T-cell (primary cell): ENCODE measurements at regions of chr4 and their contacts with region 1.

Region 1: DNA sequence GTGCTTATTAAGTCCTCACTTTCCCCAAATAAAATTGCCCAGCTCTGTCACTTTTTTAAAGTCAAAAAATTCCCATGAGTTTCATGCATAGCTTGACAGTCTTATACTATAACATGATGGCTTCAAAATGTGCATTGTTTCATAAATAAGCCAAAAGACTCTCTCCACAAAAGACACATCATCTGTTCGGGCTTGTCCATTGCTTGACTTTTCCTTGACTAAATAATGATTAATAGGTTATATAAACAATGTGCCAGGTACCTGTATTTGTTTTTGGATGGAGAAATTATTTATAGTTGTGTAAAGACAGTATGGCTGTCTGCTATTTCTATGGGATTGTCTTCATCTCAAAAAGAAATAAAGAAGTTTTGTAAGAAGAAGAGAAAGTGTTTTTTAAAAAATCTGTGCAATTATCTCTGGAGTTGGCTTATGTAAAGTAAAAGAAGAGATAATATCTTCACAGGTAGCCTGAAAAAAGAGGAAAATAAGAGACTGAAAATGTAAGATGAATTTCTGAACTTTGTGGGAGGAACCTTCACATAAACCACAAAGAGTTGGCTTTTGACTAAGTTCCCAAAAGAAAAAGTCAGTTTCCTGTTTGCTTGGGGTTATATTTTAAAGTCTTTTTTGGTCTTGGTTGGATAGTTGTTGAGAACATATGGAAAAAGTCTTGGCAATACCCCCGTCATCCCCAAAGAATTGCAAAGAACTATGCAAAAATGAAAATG is 329.0 kb upstream of the KLF3 start:
- DNase-seq: no peak
- ATAC-seq: no peak
- H3K4me3 ChIP-seq: no peak overlapping the region
- H3K4me3 Mint-ChIP-seq: peak overlapping the region in 2 of 3 donors; percentile 40 to 57
- H3K27ac ChIP-seq: no peak overlapping the region
- H3K27ac Mint-ChIP-seq: peak overlapping the region; percentile 69 to 74
- H3K4me1 ChIP-seq: peaks cover 24 to 42% of the 10 kb centered on the region in 2 experiments
- H3K4me1 Mint-ChIP-seq: peaks cover 38 to 49% (median 41%) of the 10 kb centered on the region in 3 donors
- H3K27me3 ChIP-seq: no peaks in the 10 kb centered on the region
- H3K27me3 Mint-ChIP-seq: no peaks in the 10 kb centered on the region

Region 2: DNA sequence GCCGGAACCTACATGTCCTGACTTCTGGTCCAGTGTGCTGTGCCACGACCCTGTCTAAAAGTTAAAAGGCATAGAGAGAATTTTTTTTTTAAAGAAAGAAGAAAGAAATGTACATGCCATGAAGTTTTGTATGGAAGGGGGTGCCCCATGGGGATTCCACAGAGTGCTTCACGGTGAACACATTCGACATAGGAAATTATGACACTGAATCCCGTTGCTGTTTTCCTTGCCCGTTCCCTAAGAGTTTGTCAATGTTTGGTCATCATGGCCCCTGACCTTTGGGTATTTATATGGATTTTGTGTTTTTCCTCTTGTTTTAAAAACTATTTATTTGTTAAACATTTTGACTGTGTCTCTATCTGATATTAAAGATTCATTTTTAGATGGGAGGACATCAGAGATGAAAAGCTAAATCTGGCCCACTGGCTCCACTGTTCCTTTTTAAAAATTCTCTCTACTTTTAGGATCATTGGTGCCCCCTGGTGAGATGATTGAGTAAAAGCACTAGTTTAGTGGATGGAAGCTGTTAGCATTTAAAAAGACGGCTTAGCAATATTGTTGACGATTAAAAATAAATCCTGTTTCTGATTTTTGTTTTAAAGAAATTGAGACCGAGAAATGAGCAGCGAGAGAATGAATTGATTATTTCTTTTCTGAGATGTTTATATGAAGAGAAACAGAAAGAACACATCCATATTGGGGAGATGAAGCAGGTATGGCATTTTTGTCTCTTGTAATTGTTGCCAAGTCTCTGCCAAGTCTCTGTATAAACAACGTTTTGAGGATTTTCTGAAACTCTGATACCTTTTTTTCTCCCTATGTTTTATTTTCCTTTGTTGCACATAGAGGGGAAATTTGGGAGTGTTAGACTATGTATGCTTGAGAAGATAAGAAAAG is 299.7 kb before region 1 on chr4:
- CTCF ChIA-PET with region 1: no interaction called
- POLR2A ChIA-PET with region 1: interaction called in 1 of 2 experiments, 12 read pairs
- DNase-seq: peak in 24 of 35 experiments; percentile 4 to 76 (median 22)
- ATAC-seq: peak; percentile 29 to 66 (median 41)
- H3K4me3 ChIP-seq: no peak overlapping the region
- H3K4me3 Mint-ChIP-seq: no peak overlapping the region
- H3K27ac ChIP-seq: no peak overlapping the region
- H3K27ac Mint-ChIP-seq: no peak overlapping the region
- H3K4me1 ChIP-seq: no peaks in the 10 kb centered on the region
- H3K4me1 Mint-ChIP-seq: peaks cover 0 to 1% (median 0%) of the 10 kb centered on the region in 3 donors
- H3K27me3 ChIP-seq: no peaks in the 10 kb centered on the region
- H3K27me3 Mint-ChIP-seq: no peaks in the 10 kb centered on the region

Region 3: GRCh38 chr4:38237139-38237538 is 97.8 kb before region 1 on chr4:
- CTCF ChIA-PET with region 1: no interaction called
- POLR2A ChIA-PET with region 1: no interaction called
- DNase-seq: no peak
- ATAC-seq: no peak
- H3K4me3 ChIP-seq: no peak overlapping the region
- H3K4me3 Mint-ChIP-seq: no peak overlapping the region
- H3K27ac ChIP-seq: no peak overlapping the region
- H3K27ac Mint-ChIP-seq: no peak overlapping the region
- H3K4me1 ChIP-seq: no peaks in the 10 kb centered on the region
- H3K4me1 Mint-ChIP-seq: peaks cover 0 to 3% (median 2%) of the 10 kb centered on the region in 3 donors
- H3K27me3 ChIP-seq: peaks cover 0 to 3% of the 10 kb centered on the region in 2 experiments
- H3K27me3 Mint-ChIP-seq: no peaks in the 10 kb centered on the region